ENCODE measurements at regions of chr17 and their contacts with region 1.

Region 1: DNA sequence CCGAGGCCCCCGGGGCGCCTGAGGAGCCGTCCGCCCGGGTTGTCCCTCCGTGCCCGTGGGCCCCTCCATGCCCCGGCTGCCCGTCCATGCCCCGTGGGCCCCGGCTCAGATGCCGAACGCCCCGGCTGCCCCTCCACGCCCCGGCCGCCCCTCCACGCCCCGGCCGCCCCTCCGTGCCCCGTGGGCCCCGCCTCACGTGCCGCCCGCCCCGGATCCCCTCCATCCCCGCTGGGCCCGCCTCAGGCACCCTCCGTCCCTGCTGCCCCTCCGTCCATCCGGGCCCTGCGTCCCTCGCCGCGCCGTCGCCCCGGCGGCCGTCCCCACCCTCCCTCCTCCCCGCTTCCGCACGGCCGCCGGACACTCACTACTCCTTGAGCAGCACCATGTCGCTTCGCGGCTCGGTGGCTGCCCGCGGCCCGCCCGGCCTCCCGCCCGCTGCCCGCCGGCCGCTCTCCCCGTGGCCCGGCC is 382 bp downstream of the PITPNA start:
- DNase-seq: no peak
- ATAC-seq: peak; percentile 54
- H3K4me3 Mint-ChIP-seq: peak overlapping the region; percentile 81
- H3K27ac Mint-ChIP-seq: peak overlapping the region; percentile 36
- H3K4me1 Mint-ChIP-seq: peaks cover 34% of the 10 kb centered on the region
- H3K27me3 Mint-ChIP-seq: no peaks in the 10 kb centered on the region

Region 2: GRCh38 chr17:1573916-1574696 is 11.9 kb after region 1 on chr17:
- CTCF ChIA-PET with region 1: interaction called, 10 read pairs
- DNase-seq: peak; percentile 75
- ATAC-seq: peak; percentile 84
- H3K4me3 Mint-ChIP-seq: no peak overlapping the region
- H3K27ac Mint-ChIP-seq: no peak overlapping the region
- H3K4me1 Mint-ChIP-seq: peaks cover 1% of the 10 kb centered on the region
- H3K27me3 Mint-ChIP-seq: no peaks in the 10 kb centered on the region

Measured in activated CD8-positive, alpha-beta memory T cell treated with anti-CD3 and anti-CD28 coated beads, Interleukin-2, amount 10 ng/mL, durations not matched to agents 7 days and 5 days (primary cell).